Posterior cingulate gyrus (tissue), 11 donors: ENCODE measurements at regions of chr20 and their contacts with region 1.

Region 1: GRCh38 chr20:53915446-53916172 is 154.8 kb downstream of the BCAS1 start:
- DNase-seq: peak; percentile 82 to 97 (median 94)

Region 2: DNA sequence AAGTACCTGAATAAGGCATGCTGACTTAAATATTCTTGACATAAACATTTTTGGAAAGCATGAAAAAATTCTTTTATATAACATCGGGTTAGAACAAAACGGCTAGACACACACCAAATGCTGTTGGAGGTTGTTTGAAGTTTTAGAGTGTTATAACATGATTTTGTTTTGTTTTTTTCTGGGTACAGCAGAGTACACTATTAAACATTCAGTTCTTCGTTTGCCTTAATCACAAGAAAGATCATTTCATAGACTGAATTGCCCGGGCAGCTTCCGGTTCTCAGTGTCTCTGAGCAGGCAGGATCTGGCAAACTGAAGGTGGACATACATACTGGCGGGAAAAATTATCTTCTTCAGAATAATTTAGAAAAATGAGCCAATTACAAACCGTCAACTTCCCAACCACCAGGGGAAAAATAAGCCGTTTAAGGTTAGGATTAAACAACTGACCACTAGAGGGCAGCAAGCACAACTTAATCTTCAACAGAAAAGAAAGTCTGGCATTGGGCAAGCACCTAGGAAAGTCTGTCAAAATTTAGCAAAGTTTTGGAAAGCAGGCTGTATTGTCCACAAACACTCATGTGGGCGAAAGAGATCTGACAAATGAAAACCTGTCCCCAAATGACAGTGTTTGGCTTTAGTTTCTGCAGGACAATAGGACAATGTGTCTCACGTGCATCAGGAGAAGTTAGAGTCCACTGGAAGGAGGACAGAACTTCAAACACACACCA is 337.0 kb before region 1 on chr20:
- intact Hi-C with region 1: loop called (anchors 1 kb)
- DNase-seq: peak in 3 of 10 donors; percentile 23 to 75 (median 40)

Region 3: DNA sequence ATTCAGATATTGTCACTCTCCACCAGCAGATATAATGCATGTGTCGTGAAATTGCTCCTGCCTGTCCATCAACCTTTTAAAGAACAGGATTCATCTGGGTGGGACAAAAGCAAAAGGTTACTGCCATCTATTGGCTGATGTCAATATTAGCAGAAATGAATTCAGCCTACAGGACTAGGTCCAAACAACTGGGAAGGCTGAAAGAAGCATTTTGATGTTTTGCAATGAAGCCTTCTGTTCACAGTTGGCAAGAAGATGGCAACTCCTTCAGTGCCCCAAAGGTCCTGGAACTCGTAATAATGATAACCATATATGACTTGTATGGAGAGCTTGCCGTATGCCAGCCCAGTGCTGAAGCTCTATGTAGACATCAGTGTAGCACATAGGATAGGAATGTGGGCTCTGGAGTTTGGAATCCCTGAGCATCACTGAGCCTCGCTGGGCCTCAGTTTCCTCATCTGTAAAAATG is 147.2 kb after region 1 on chr20:
- intact Hi-C with region 1: loop called (anchors 2 kb)
- DNase-seq: no peak

Region 4: DNA sequence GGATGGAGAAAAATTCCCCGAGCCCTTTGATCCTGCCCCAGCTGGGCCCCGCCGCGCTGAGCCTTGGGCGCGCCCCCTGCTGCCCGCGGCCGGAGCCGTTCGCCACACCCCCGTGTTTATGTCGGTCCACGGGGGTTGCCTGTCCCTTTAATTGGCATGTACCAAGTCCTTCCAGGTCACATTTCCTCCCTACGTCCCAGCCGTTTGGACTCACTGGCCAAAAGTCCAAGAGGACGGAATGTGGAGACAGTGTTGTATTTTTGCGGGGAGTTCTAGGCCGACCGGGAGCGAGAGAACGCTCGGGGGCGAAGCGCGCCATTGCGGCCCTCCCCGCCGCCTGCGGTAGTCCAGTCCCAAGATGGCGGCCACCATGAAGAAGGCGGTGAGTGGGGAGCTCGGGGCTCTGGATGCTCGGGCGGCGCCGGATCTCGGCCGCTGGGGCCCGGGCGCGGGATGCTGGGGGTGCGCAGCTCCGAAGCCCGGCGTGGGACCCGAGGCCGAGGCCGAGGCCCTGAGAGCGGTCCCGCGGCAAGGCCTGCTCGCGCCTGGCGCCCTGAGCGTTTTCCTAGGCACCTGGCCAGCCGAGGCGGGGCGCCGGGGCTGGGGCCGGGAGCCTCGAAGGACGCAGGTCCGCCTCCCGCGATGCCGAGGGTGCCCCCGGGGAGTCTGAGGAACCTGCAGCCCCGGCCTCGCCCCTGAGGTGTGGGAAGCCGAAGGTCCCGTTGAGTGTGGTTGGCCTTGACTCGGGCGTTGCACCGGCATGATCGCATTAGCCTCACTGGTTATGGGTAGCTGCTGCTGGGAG is 292.3 kb after region 1 on chr20 and contains the start of gene PFDN4:
- intact Hi-C with region 1: loop called (anchors 10 kb)
- DNase-seq: peak; percentile 64 to 97 (median 78)